ENCODE measurements at regions of chr2 and their contacts with region 1.

Region 1: GRCh38 chr2:75375646-75376582 is 176.6 kb upstream of the TACR1 start:
- DNase-seq: no peak
- H3K4me3 ChIP-seq: no peak overlapping the region
- H3K27ac ChIP-seq: no peak overlapping the region
- H3K4me1 ChIP-seq: no peaks in the 10 kb centered on the region
- H3K27me3 ChIP-seq: no peaks in the 10 kb centered on the region
- CTCF ChIP-seq: no peak

Region 2: GRCh38 chr2:75361486-75361885 is 14.4 kb before region 1 on chr2:
- CTCF ChIA-PET with region 1: no interaction called
- POLR2A ChIA-PET with region 1: no interaction called
- intact Hi-C with region 1: loop called (anchors 2 kb)
- DNase-seq: no peak
- H3K4me3 ChIP-seq: no peak overlapping the region
- H3K27ac ChIP-seq: no peak overlapping the region
- H3K4me1 ChIP-seq: no peaks in the 10 kb centered on the region
- H3K27me3 ChIP-seq: no peaks in the 10 kb centered on the region
- CTCF ChIP-seq: no peak

Region 3: DNA sequence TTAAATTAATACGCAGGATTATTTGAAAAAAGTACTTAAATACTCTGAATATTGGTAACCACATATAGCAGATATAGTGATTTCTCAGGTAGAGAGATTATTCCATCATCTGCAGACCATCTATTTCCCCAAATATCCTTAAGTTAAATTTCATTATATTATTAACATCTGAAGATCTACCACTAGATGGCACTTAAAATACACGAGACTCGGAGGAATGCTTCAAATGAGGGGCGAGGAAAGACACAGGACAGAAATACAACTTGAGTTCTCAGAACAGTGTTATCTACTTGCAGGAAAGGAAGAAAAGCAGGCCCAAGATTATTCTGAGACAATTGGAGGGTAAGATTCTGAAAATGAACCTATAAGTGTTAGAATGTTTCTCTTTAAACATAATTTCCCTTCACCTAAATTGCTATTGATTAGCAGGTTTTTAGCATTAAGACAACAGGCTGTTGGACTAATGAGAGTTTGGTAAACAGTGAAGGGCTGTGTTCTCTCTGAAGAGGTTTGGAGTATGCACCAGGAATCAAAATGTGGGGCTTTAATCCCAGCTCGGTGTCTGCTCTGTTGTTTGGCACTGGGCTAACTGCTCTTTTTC is 411.7 kb after region 1 on chr2:
- CTCF ChIA-PET with region 1: no interaction called
- POLR2A ChIA-PET with region 1: no interaction called
- intact Hi-C with region 1: no loop called
- DNase-seq: no peak
- H3K4me3 ChIP-seq: no peak overlapping the region
- H3K27ac ChIP-seq: no peak overlapping the region
- H3K4me1 ChIP-seq: no peaks in the 10 kb centered on the region
- H3K27me3 ChIP-seq: peaks cover 8% of the 10 kb centered on the region; the same call in 1 of the 2 replicates
- CTCF ChIP-seq: peak; percentile 77

Region 4: DNA sequence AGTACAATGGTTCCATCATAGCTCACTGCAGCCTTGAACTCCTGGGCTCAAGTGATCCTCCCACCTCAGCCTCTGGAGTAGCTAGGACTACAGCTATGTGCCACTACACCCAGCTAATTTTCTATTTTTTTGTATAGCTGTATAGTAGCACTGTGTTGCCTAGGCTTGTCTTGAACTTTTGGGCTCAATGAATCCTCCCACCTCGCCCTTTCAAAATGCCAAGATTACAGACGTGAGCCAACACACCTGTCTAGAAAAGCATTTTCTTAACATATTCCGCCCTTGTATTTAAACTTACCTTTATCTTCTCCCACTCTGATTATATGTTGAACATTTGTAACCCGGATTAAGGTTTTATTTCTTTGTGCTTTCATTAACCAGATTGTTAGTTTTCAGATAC is 1085.5 kb after region 1 on chr2:
- CTCF ChIA-PET with region 1: no interaction called
- POLR2A ChIA-PET with region 1: interaction called, 17 read pairs
- intact Hi-C with region 1: no loop called
- DNase-seq: no peak
- H3K4me3 ChIP-seq: no peak overlapping the region
- H3K27ac ChIP-seq: no peak overlapping the region
- H3K4me1 ChIP-seq: no peaks in the 10 kb centered on the region
- H3K27me3 ChIP-seq: 0 out of 2 replicates have a peak, but pooled peaks cover 4% of the 10 kb centered on the region
- CTCF ChIP-seq: no peak